ENCODE measurements at regions of chr3 and their contacts with region 1.

Region 1: GRCh38 chr3:11379233-11379823 is 107.1 kb downstream of the ATG7 start:
- DNase-seq: peak; percentile 53
- ATAC-seq: no peak
- H3K4me3 ChIP-seq: no peak overlapping the region
- H3K4me3 Mint-ChIP-seq: no peak overlapping the region
- H3K27ac ChIP-seq: no peak overlapping the region
- H3K27ac Mint-ChIP-seq: no peak overlapping the region
- H3K4me1 ChIP-seq: no peaks in the 10 kb centered on the region
- H3K4me1 Mint-ChIP-seq: no peaks in the 10 kb centered on the region
- H3K27me3 ChIP-seq: no peaks in the 10 kb centered on the region
- H3K27me3 Mint-ChIP-seq: no peaks in the 10 kb centered on the region
- CTCF ChIP-seq: peak; percentile 64

Region 2: DNA sequence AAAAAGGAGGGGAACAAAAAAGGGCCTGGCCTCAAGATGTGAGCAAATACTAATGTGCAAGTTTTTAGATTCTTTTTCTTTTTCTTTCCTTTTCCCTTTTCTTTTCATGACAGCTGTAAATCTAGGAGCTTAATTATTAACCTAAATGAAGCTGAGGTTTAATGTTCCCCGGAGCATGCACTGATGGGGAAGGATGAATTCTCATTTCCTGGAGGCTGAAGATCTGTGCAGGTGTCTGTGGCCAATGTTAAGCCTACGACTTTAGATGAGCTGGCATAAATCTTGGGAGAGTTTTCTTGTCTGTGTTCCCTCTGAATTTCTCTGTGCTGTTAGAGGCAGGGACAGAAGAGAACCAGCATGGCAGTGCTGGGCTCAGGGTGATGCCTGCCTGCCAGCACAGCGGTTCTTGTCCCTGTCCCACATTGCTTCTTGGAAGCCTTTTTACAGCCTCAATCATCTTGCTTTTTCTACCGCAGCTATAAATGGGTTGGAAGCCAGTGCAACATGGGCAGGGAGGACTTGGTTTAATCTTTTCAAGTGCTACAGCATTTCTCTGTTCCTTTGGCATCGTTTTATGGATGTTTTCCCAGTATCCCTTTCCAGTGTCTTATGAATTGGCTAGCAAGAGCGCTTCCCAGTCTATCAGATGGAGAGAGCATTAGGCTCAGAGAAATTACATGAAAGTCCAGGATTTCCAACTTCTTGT is 12.0 kb after region 1 on chr3:
- CTCF ChIA-PET with region 1: interaction called, 19 read pairs
- POLR2A ChIA-PET with region 1: no interaction called
- intact Hi-C with region 1: no loop called
- DNase-seq: no peak
- ATAC-seq: no peak
- H3K4me3 ChIP-seq: no peak overlapping the region
- H3K4me3 Mint-ChIP-seq: no peak overlapping the region
- H3K27ac ChIP-seq: no peak overlapping the region
- H3K27ac Mint-ChIP-seq: no peak overlapping the region
- H3K4me1 ChIP-seq: no peaks in the 10 kb centered on the region
- H3K4me1 Mint-ChIP-seq: peaks cover 2% of the 10 kb centered on the region
- H3K27me3 ChIP-seq: no peaks in the 10 kb centered on the region
- H3K27me3 Mint-ChIP-seq: no peaks in the 10 kb centered on the region
- CTCF ChIP-seq: no peak

Region 3: DNA sequence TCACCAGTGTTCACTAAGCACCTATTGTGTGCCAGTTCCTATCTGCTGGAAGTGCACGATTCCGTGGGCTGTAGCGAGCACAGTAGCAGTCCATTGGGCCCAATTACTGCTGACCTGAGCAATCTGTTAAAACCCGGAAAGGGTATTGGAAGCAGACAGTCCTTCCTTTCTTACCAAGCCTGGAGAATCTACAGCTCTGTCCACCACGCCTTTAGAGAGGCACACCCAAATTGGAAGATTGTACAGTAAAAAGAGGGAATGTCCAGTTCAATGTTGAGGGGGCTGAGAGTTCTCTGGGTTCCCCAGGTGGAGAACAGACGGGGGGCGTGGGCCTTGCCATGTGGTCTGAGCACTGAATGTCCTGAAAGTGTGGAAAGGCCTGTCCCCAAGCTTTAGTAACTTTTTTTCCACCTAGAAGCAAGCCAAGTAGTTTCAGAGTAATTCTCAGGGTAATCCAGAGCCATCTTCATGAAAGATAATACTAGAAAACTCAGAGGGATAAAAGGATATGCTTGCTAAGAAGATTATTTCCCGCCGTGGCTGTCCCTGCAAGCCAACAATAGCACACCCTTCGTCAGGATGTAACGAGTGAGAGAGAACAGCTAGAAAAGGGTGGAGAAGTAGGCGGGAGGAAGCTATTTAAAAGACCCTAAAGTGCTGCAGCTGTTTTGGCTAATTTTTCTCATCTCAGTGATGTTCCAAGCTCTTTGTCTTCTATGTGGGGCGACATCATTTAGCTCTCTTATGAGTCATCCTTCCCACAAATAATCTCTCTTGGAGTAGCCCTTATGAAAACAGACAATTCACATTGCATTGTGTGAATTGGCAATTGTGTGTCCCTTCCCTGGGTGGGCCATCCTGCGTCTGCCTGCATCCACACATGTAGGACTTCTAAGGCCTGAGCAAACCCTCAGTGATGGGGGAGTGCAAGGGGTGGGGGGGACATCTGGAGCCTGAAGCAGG is 73.8 kb after region 1 on chr3:
- CTCF ChIA-PET with region 1: no interaction called
- POLR2A ChIA-PET with region 1: no interaction called
- intact Hi-C with region 1: no loop called
- DNase-seq: no peak
- ATAC-seq: no peak
- H3K4me3 ChIP-seq: no peak overlapping the region
- H3K4me3 Mint-ChIP-seq: no peak overlapping the region
- H3K27ac ChIP-seq: no peak overlapping the region
- H3K27ac Mint-ChIP-seq: no peak overlapping the region
- H3K4me1 ChIP-seq: no peaks in the 10 kb centered on the region
- H3K4me1 Mint-ChIP-seq: no peaks in the 10 kb centered on the region
- H3K27me3 ChIP-seq: no peaks in the 10 kb centered on the region
- H3K27me3 Mint-ChIP-seq: no peaks in the 10 kb centered on the region
- CTCF ChIP-seq: no peak

Region 4: GRCh38 chr3:11662402-11662990 is 283.2 kb after region 1 on chr3:
- CTCF ChIA-PET with region 1: interaction called, 10 read pairs
- POLR2A ChIA-PET with region 1: no interaction called
- intact Hi-C with region 1: no loop called
- DNase-seq: no peak
- ATAC-seq: no peak
- H3K4me3 ChIP-seq: no peak overlapping the region
- H3K4me3 Mint-ChIP-seq: no peak overlapping the region
- H3K27ac ChIP-seq: no peak overlapping the region
- H3K27ac Mint-ChIP-seq: no peak overlapping the region
- H3K4me1 ChIP-seq: no peaks in the 10 kb centered on the region
- H3K4me1 Mint-ChIP-seq: no peaks in the 10 kb centered on the region
- H3K27me3 ChIP-seq: no peaks in the 10 kb centered on the region
- H3K27me3 Mint-ChIP-seq: no peaks in the 10 kb centered on the region
- CTCF ChIP-seq: no peak

Region 5: DNA sequence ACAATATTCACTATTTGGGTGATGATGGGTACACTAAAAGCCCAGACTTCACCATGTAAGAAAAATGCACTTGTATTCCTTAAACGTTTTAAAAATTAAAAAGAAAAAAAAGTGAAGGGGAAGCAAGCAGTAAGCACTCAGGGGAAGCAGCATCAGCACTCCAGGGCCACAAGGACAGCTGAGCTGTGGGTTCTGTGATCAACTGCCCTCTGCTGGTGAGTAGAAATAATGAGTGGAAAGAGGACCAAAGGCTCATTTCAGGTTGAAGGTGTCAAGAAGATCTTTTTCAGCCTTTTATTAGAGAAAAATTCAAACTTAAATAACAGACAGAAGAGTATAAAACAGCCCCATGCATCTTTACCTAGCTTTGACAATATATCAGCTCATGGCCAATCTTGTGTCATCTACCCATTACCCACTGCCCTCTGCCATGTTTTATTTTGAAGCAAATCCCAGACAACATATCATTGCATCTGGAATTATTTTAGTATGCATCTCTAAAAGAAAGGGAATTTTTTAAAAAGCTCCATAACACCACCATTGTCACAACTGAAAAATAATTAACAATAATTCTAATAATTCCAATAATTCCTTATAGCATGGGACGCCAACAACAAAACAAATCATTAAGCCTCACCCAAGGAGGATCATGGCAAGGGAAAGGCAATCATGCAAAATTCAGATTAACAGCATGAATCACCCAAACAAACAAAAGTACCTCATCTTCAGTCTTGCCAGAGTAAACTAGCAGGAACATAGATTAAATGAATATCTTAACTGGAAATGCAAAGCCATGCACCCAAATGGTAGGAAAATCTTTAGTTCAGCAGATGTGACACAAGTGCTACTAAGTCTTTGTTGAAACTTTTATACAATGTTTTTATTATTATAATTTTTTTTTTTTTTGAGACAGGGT is 424.9 kb after region 1 on chr3:
- CTCF ChIA-PET with region 1: interaction called, 38 read pairs
- POLR2A ChIA-PET with region 1: no interaction called
- intact Hi-C with region 1: no loop called
- DNase-seq: peak; percentile 55
- ATAC-seq: peak; percentile 75
- H3K4me3 ChIP-seq: no peak overlapping the region
- H3K4me3 Mint-ChIP-seq: no peak overlapping the region
- H3K27ac ChIP-seq: no peak overlapping the region
- H3K27ac Mint-ChIP-seq: no peak overlapping the region
- H3K4me1 ChIP-seq: no peaks in the 10 kb centered on the region
- H3K4me1 Mint-ChIP-seq: no peaks in the 10 kb centered on the region
- H3K27me3 ChIP-seq: no peaks in the 10 kb centered on the region
- H3K27me3 Mint-ChIP-seq: no peaks in the 10 kb centered on the region
- CTCF ChIP-seq: peak; percentile 82

Measured in B cell (primary cell).